Mammary epithelial cell (primary cell): ENCODE measurements at regions of chr11 and their contacts with region 1.

Region 1: GRCh38 chr11:64428693-64429092 is 69.7 kb downstream of the RPS6KA4 start:
- DNase-seq: no peak
- H3K4me3 ChIP-seq: no peak overlapping the region
- H3K27ac ChIP-seq: no peak overlapping the region
- H3K4me1 ChIP-seq: no peaks in the 10 kb centered on the region
- H3K27me3 ChIP-seq: peaks cover 2% of the 10 kb centered on the region
- CTCF ChIP-seq: no peak

Region 2: GRCh38 chr11:64305075-64305690 is 123.5 kb before region 1 on chr11 and contains the start of gene ESRRA:
- CTCF ChIA-PET with region 1: no interaction called
- dilution Hi-C with region 1: no loop called
- in situ Hi-C with region 1: no loop called
- intact Hi-C with region 1: no loop called
- DNase-seq: peak; percentile 97
- H3K4me3 ChIP-seq: peak within 1 kb of the TSS; percentile 57 to 71 (median 65)
- H3K27ac ChIP-seq: peak within 1 kb of the TSS; percentile 46
- H3K4me1 ChIP-seq: peaks cover 30% of the 10 kb centered on the region
- H3K27me3 ChIP-seq: no peaks in the 10 kb centered on the region
- CTCF ChIP-seq: no peak
- total RNA-seq, gene ESRRA: 44.8 to 67.0 TPM

Region 3: GRCh38 chr11:64482588-64482987 is 53.9 kb after region 1 on chr11:
- CTCF ChIA-PET with region 1: no interaction called
- dilution Hi-C with region 1: no loop called
- in situ Hi-C with region 1: no loop called
- intact Hi-C with region 1: no loop called
- DNase-seq: no peak
- H3K4me3 ChIP-seq: no peak overlapping the region
- H3K27ac ChIP-seq: no peak overlapping the region
- H3K4me1 ChIP-seq: no peaks in the 10 kb centered on the region
- H3K27me3 ChIP-seq: peaks cover 4% of the 10 kb centered on the region
- CTCF ChIP-seq: no peak

Region 4: DNA sequence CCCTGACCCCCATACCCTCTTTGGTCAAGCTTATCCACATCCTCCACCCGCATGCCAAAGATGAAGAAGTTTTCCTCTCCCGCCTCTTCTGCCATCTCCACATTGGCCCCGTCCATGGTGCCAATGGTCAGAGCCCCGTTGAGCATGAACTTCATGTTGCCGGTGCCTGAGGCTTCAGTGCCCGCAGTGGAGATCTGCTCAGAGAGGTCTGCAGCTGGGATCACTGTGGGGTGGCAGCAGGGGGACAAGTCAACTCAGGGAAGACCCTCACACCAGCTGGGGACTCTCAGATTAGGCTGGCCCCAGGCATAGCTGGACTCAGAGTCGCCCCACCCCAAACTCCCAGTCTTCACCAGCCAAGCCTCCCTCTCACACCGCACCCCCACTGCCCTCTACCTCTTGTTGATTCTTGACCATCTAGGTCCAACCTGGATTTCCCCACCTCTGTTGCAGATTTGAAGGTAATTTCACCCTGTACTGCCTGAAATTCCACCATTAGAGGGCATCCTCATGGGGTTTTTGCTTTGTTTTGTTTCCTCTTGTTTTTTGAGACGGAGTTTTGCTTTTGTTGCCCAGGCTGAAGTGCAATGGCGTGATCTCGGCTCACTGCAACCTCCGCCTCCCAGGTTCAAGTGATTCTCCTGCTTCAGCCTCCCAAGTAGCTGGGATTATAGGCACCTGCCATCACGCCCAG is 321.8 kb after region 1 on chr11:
- CTCF ChIA-PET with region 1: no interaction called
- dilution Hi-C with region 1: loop called (anchors 5 kb)
- in situ Hi-C with region 1: no loop called
- intact Hi-C with region 1: no loop called
- DNase-seq: no peak
- H3K4me3 ChIP-seq: no peak overlapping the region
- H3K27ac ChIP-seq: no peak overlapping the region
- H3K4me1 ChIP-seq: peaks cover 9% of the 10 kb centered on the region
- H3K27me3 ChIP-seq: no peaks in the 10 kb centered on the region
- CTCF ChIP-seq: no peak